Testis (tissue), 5 donors: ENCODE measurements at regions of chr11 and their contacts with region 1.

Region 1: GRCh38 chr11:44893846-44894617 is 56.7 kb downstream of the TP53I11 start:
- DNase-seq: peak; percentile 80
- H3K4me3 ChIP-seq: no peak overlapping the region
- H3K27ac ChIP-seq: peak overlapping the region in 1 of 2 donors; percentile 12
- H3K4me1 ChIP-seq: peaks cover 10% of the 10 kb centered on the region
- H3K27me3 ChIP-seq: no peaks in the 10 kb centered on the region
- CTCF ChIP-seq: peak; percentile 80 to 89 (median 83)
- POLR2A ChIP-seq: no peak

Region 2: GRCh38 chr11:44519989-44520737 is 373.9 kb before region 1 on chr11:
- intact Hi-C with region 1: no loop called
- DNase-seq: peak; percentile 80
- H3K4me3 ChIP-seq: peak overlapping the region in 1 of 2 donors; percentile 4
- H3K27ac ChIP-seq: no peak overlapping the region
- H3K4me1 ChIP-seq: peaks cover 4% of the 10 kb centered on the region
- H3K27me3 ChIP-seq: no peaks in the 10 kb centered on the region
- CTCF ChIP-seq: no peak
- POLR2A ChIP-seq: no peak

Region 3: GRCh38 chr11:44727373-44728287 is 166.4 kb before region 1 on chr11:
- intact Hi-C with region 1: loop called (anchors 5 kb)
- DNase-seq: peak; percentile 89
- H3K4me3 ChIP-seq: peak overlapping the region; percentile 53 to 69
- H3K27ac ChIP-seq: no peak overlapping the region
- H3K4me1 ChIP-seq: peaks cover 15% of the 10 kb centered on the region
- H3K27me3 ChIP-seq: no peaks in the 10 kb centered on the region
- CTCF ChIP-seq: peak; percentile 88 to 94 (median 93)
- POLR2A ChIP-seq: no peak